K562 (cell line): ENCODE measurements at regions of chr15 and their contacts with region 1.

Region 1: DNA sequence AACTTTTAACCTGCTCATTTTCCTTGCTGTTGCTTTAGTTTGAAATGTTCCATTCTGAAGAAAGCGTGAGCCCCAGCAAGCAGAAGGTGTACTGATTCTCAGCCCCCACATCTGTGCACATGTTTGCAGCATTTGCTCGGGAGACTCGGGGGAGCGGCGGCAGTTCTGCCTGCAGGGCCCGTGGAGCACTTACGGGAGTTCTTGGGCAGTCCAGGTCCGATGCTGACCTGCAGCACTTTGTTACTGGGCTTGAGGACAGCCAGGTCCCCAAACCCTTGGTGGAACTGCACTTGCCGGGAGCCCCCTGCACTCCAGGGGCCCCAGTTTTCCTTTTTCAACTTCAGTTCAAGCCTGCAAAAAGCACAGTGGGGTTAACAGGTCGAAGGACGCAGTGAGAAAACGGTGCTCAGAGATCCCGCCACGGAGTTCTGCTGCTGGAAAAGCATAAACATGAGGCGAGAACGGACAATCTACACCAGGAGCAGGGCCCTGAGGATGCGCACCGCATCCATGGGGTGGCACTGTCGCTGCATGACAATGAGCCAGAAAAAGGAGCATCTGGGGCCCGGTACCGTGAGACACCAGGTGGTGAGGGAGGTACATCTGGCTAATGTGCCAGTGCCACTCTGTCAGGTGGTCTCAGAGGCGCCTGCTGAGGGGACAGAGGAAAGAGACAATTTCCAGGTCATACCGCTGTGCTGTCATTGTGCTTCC is 45.6 kb upstream of the LDHAL6B start:
- DNase-seq: peak; percentile 46 to 63 (median 56)
- ATAC-seq: peak; percentile 97
- H3K4me3 ChIP-seq: no peak overlapping the region
- H3K27ac ChIP-seq: no peak overlapping the region
- H3K4me1 ChIP-seq: peaks cover 0 to 4% of the 10 kb centered on the region in 2 experiments; a peak in 1 of 5 replicates
- H3K27me3 ChIP-seq: peaks cover 10 to 46% of the 10 kb centered on the region in 2 experiments; a peak in 4 of 5 replicates
- CTCF ChIP-seq: peak; percentile 82 to 90 (median 89)
- EP300 ChIP-seq: no peak
- POLR2A ChIP-seq: no peak
- RAD21 ChIP-seq: peak; percentile 68 to 88

Region 2: GRCh38 chr15:58957101-58957973 is 203.7 kb before region 1 on chr15:
- CTCF ChIA-PET with region 1: no interaction called
- POLR2A ChIA-PET with region 1: no interaction called
- in situ Hi-C with region 1: no loop called
- intact Hi-C with region 1: no loop called
- DNase-seq: peak; percentile 57 to 84 (median 59)
- ATAC-seq: peak; percentile 97
- H3K4me3 ChIP-seq: no peak overlapping the region
- H3K27ac ChIP-seq: no peak overlapping the region
- H3K4me1 ChIP-seq: peaks cover 0 to 7% of the 10 kb centered on the region in 2 experiments; a peak in 2 of 5 replicates
- H3K27me3 ChIP-seq: no peaks in the 10 kb centered on the region
- CTCF ChIP-seq: peak; percentile 89 to 98 (median 97)
- EP300 ChIP-seq: no peak
- POLR2A ChIP-seq: no peak
- RAD21 ChIP-seq: peak; percentile 35 to 81

Region 3: GRCh38 chr15:59179717-59180116 is 18.7 kb after region 1 on chr15:
- CTCF ChIA-PET with region 1: no interaction called
- POLR2A ChIA-PET with region 1: no interaction called
- in situ Hi-C with region 1: no loop called
- intact Hi-C with region 1: no loop called
- DNase-seq: no peak
- ATAC-seq: no peak
- H3K4me3 ChIP-seq: no peak overlapping the region
- H3K27ac ChIP-seq: no peak overlapping the region
- H3K4me1 ChIP-seq: no peaks in the 10 kb centered on the region
- H3K27me3 ChIP-seq: peaks cover 23 to 27% of the 10 kb centered on the region in 2 experiments
- CTCF ChIP-seq: no peak
- EP300 ChIP-seq: no peak
- POLR2A ChIP-seq: no peak
- RAD21 ChIP-seq: no peak

Region 4: DNA sequence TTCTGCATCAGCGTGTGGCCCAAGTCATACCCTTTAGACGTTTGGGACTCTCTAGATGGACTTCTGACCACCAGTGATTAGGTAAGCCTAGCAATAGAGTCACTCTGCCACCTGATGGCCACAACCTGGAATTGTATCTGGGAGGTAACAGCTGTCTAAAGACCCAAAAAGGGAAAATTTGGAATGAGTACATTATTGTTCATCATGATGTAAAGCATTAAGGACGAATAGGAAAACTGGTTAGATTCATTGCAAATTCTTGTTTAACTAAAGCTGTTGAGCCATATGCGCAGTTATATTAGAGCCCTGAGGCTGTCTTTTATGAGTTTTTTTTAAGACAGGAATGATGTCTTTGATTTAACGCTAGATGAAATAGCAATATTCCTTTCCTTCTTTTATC is 340.6 kb after region 1 on chr15:
- CTCF ChIA-PET with region 1: no interaction called
- POLR2A ChIA-PET with region 1: no interaction called
- in situ Hi-C with region 1: no loop called
- intact Hi-C with region 1: loop called (anchors 1 kb)
- DNase-seq: peak; percentile 47 to 66 (median 60)
- ATAC-seq: peak; percentile 87
- H3K4me3 ChIP-seq: no peak overlapping the region
- H3K27ac ChIP-seq: no peak overlapping the region
- H3K4me1 ChIP-seq: no peaks in the 10 kb centered on the region
- H3K27me3 ChIP-seq: peaks cover 5 to 12% of the 10 kb centered on the region in 2 experiments; a peak in 3 of 5 replicates
- CTCF ChIP-seq: peak; percentile 75 to 77 (median 76)
- EP300 ChIP-seq: no peak
- POLR2A ChIP-seq: no peak
- RAD21 ChIP-seq: peak; percentile 62 to 84